Psoas muscle (tissue), 8 donors: ENCODE measurements at regions of chr7 and their contacts with region 1.

Region 1: DNA sequence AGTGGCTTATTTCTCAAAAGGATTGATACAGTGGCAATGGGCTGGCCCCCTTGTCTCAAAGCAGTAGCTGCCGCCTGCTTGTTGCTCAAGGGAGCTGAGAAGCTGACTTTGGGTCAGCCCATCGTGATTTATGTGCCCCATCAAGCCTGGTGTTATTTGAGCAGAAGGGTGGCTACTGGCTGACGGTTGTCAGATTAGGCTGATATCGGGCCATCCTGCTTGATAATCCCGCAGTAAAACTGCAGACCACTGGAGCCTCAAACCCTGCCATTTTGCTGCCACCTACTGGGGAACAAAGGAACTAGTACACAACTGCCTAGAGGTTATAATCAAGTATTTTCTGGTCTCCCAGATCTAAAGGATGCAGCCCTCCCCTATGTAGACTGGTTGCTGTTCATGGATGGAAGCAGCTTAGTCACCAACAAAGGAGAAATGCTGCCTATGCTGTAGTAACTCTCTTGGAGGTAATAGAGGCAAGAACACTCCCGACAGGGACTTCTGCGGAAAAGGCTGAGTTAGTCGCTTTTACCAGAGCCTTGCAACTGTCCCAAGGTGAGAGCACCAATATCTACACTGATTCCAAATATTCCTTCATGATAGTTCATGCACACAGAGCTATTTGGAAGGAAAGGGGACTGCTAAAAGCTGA is 65.9 kb upstream of the ZNF92 start:
- DNase-seq: peak in 1 of 2 donors; percentile 20
- ATAC-seq: peak; percentile 37 to 68 (median 66)
- H3K4me3 ChIP-seq: no peak overlapping the region
- H3K27ac ChIP-seq: no peak overlapping the region
- H3K4me1 ChIP-seq: no peaks in the 10 kb centered on the region
- H3K27me3 ChIP-seq: peaks cover 0 to 3% (median 0%) of the 10 kb centered on the region in 3 donors
- CTCF ChIP-seq: peak; percentile 85

Region 2: DNA sequence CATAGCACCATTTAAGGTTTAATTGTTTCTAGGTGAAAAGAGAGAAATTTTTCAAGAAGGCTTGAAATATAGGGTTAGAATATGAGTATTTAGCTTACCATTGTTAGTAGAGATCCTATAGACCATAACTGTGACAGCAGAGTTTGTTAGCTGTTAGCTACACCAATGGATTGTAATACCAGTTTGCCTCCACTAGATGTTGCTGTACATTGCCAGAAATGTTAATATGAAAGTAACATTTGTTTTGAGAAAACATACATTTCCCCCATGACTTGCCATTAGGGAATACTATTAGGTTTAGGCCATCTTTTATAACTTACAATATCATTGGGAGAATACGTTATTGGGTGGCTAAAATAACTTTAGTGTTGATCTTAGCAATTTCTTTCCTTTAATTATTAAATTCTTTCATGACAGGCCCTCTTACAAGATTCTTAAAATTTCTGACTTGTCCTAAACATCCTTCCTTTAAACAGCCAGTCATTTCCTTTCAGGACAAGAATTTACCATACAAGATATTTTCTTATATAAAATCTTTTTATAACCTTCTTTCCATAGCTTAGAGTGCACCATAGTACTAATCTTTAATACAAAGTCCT is 356.4 kb before region 1 on chr7:
- intact Hi-C with region 1: loop called (anchors 1 to 2 kb)
- DNase-seq: no peak
- ATAC-seq: peak; percentile 75 to 88 (median 82)
- H3K4me3 ChIP-seq: peak overlapping the region; percentile 16
- H3K27ac ChIP-seq: peak overlapping the region; percentile 78
- H3K4me1 ChIP-seq: peaks cover 9% of the 10 kb centered on the region
- H3K27me3 ChIP-seq: peaks cover 0 to 12% (median 0%) of the 10 kb centered on the region in 3 donors
- CTCF ChIP-seq: peak; percentile 92

Region 3: GRCh38 chr7:65219623-65220022 is 88.2 kb before region 1 on chr7:
- intact Hi-C with region 1: loop called in 1 of 2 experiments (anchors 5 kb)
- DNase-seq: no peak
- ATAC-seq: no peak
- H3K4me3 ChIP-seq: no peak overlapping the region
- H3K27ac ChIP-seq: no peak overlapping the region
- H3K4me1 ChIP-seq: no peaks in the 10 kb centered on the region
- H3K27me3 ChIP-seq: no peaks in the 10 kb centered on the region
- CTCF ChIP-seq: no peak

Region 4: GRCh38 chr7:65251851-65252620 is 55.7 kb before region 1 on chr7:
- intact Hi-C with region 1: no loop called
- DNase-seq: peak; percentile 31 to 56
- ATAC-seq: peak; percentile 56 to 89 (median 86)
- H3K4me3 ChIP-seq: peak overlapping the region; percentile 88
- H3K27ac ChIP-seq: peak overlapping the region; percentile 9
- H3K4me1 ChIP-seq: no peaks in the 10 kb centered on the region
- H3K27me3 ChIP-seq: peaks cover 0 to 1% (median 0%) of the 10 kb centered on the region in 3 donors
- CTCF ChIP-seq: no peak

Region 5: DNA sequence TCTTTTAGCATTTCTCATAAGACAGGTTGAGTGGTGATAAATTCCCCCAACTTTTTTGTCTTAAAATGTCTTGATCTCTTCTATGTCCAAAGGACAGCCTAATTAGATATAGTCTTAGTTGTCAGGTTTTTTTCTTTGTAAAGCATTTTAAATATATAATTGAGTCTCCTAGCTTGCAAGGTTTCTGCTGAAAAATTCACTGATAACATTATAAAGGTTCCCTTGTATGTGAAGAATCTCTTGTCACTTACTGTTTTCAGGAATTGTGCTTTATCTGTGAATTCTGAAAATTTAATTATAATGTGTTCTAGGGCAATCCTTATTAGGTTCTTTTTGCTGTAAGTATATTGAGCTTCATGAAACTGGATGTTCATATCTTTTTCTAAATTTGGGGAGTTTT is 31.0 kb before region 1 on chr7:
- intact Hi-C with region 1: no loop called
- DNase-seq: no peak
- ATAC-seq: no peak
- H3K4me3 ChIP-seq: no peak overlapping the region
- H3K27ac ChIP-seq: no peak overlapping the region
- H3K4me1 ChIP-seq: no peaks in the 10 kb centered on the region
- H3K27me3 ChIP-seq: peaks cover 0 to 19% (median 2%) of the 10 kb centered on the region in 3 donors
- CTCF ChIP-seq: no peak

Region 6: GRCh38 chr7:65463184-65463583 is 155.4 kb after region 1 on chr7:
- intact Hi-C with region 1: no loop called
- DNase-seq: no peak
- ATAC-seq: no peak
- H3K4me3 ChIP-seq: no peak overlapping the region
- H3K27ac ChIP-seq: no peak overlapping the region
- H3K4me1 ChIP-seq: no peaks in the 10 kb centered on the region
- H3K27me3 ChIP-seq: no peaks in the 10 kb centered on the region
- CTCF ChIP-seq: no peak